Activated CD4-positive, alpha-beta T cell treated with anti-CD3 and anti-CD28 coated beads, Interleukin-2, amount 10 ng/mL, durations not matched to agents 7 days and 5 days (primary cell): ENCODE measurements at regions of chr14 and their contacts with region 1.

Region 1: DNA sequence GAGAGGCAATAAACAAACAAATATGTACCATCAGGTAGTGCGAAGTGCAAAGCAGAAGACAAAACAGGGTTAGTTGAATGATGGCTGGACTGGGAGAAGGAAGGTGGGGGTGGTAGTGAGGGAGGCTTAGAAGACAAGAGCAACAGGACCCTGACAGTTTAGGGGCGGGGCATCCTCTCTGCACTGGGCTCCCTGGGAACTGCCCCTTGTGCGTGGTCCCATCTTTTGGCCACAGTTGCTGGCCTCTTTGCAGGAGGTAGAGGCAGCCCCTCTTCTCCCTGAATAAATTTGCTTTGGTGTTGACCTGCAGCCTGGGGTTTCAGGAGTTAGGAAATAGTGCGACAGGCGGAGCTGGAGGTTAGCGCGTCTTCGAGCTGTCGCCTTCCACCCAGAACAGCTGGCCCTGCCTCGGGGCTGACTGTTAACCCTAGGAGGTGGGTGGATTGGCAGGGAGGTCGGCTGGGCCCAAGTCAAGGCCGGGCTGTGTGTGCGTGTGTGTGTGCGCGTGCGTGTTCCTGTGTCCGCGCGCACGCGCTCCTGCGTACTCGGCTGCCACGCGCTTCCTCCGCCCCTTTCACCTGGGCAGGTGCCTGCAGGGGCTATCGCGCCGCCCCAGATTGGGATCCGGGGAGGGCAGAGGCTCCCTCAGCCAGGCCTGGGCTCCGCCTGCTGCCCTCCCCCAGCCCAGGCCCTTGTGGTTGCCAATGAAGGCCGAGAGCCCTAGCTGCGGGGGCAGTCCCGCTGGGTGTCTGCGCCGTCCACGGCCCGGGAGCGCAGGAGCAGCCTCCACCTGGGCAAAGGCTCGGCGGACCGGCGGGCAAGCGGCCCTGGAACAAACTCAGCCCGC is 180.8 kb downstream of the ADCK1 start:
- DNase-seq: no peak
- H3K4me3 Mint-ChIP-seq: peak overlapping the region; percentile 14
- H3K27ac Mint-ChIP-seq: no peak overlapping the region
- H3K4me1 Mint-ChIP-seq: peaks cover 13% of the 10 kb centered on the region
- H3K27me3 Mint-ChIP-seq: peaks cover 41% of the 10 kb centered on the region

Region 2: DNA sequence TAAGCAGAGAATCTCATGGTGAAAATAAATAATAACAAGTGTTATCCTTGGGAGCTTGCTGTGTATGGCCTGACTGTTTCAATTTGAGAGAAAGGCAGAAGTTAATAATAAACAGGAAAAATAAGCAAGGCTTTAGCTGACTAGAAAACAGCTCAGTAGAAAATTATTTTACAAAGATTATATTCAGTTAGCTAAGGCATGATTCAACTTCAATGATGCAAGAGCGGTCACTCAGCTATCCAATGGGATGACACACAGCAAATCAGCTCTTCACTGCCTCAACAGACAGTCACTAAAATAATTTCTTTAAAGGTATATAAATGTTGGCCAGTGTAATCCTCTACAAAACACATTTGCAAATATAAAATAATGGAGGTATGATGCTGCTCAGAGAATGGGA is 641.3 kb before region 1 on chr14:
- CTCF ChIA-PET with region 1: no interaction called
- POLR2A ChIA-PET with region 1: interaction called, 11 read pairs
- DNase-seq: no peak
- H3K4me3 Mint-ChIP-seq: no peak overlapping the region
- H3K27ac Mint-ChIP-seq: no peak overlapping the region
- H3K4me1 Mint-ChIP-seq: peaks cover 5% of the 10 kb centered on the region
- H3K27me3 Mint-ChIP-seq: no peaks in the 10 kb centered on the region

Region 3: GRCh38 chr14:77950371-77951063 is 30.2 kb before region 1 on chr14:
- CTCF ChIA-PET with region 1: no interaction called
- POLR2A ChIA-PET with region 1: no interaction called
- DNase-seq: no peak
- H3K4me3 Mint-ChIP-seq: no peak overlapping the region
- H3K27ac Mint-ChIP-seq: no peak overlapping the region
- H3K4me1 Mint-ChIP-seq: no peaks in the 10 kb centered on the region
- H3K27me3 Mint-ChIP-seq: peaks cover 3% of the 10 kb centered on the region

Region 4: DNA sequence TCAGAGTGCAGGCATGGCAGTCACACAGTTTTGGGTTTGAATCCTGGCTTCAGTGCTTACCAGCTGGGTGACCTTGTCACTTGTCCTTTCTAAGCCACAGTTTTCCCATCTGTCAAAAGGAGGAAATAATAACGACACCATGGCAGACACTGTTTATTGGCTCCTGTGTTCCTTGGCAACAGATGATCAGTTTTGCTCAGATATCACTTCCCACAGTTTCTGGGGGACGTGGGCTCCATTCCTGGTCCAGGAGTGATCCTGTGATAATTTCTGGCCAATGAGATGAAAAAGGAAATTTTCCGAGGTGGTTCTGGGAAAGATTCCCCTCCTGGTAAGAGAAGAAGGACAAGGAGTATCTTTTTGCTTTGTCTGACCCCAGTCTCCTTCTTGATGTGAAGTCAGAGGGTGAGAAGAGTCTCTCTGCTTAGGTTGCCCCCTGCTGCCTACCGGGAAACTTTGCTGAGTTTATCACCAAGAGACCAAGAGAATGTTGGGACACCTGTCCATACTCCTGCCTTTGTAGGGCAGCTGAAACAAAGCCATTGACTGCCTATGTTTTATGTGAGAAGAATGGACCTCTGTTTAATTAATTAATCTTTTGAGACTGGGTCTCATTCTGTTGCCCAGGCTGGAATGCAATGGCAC is 10.6 kb after region 1 on chr14:
- CTCF ChIA-PET with region 1: no interaction called
- POLR2A ChIA-PET with region 1: no interaction called
- DNase-seq: no peak
- H3K4me3 Mint-ChIP-seq: no peak overlapping the region
- H3K27ac Mint-ChIP-seq: no peak overlapping the region
- H3K4me1 Mint-ChIP-seq: no peaks in the 10 kb centered on the region
- H3K27me3 Mint-ChIP-seq: peaks cover 2% of the 10 kb centered on the region

Region 5: GRCh38 chr14:78010688-78011087 is 30.0 kb after region 1 on chr14:
- CTCF ChIA-PET with region 1: no interaction called
- POLR2A ChIA-PET with region 1: no interaction called
- DNase-seq: no peak
- H3K4me3 Mint-ChIP-seq: no peak overlapping the region
- H3K27ac Mint-ChIP-seq: no peak overlapping the region
- H3K4me1 Mint-ChIP-seq: no peaks in the 10 kb centered on the region
- H3K27me3 Mint-ChIP-seq: peaks cover 15% of the 10 kb centered on the region